GM12878 (cell line): ENCODE measurements at regions of chr19 and their contacts with region 1.

Region 1: DNA sequence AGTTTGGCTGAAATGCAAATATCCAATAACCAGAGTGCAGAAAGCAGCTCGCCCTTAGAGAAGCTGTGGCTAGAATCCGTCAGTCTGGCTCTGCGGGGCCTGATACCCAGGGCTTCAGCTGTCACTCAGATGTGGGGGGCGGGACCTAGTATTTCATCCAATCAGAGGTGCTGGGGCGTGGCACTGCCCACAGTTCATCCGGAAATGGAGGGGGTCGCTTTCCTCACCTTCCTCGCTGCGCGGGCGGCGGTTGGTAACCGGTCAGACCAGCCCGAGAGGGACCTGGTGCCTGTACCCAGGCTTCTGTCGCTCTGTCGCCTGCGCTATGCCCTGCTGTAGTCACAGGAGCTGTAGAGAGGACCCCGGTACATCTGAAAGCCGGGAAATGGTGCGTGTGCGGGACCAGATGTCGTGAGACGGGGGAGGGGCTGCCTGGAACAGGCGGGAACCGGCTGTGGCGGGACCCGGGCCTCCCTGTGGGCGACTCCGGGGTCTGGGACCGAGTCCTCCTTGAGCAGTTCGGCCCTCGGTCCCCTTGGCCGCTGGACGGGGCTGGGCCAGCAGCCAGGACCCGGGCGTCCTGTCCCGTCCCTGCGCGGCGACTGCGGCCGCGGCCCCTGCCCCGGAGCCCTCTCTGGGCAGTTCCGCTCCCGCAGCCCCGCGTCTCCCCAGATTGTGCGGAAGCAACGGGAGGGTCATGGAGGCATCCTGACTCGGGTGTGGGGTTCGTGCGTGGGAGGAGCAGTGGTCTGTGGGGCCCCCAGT is at the start of gene ZNF700:
- DNase-seq: peak; percentile 92
- ATAC-seq: peak; percentile 93
- H3K4me3 ChIP-seq: peak within 1 kb of the TSS; percentile 96
- H3K27ac ChIP-seq: peak within 1 kb of the TSS; percentile 94
- H3K4me1 ChIP-seq: peaks cover 3% of the 10 kb centered on the region; the same call in 1 of the 2 replicates
- H3K27me3 ChIP-seq: no peaks in the 10 kb centered on the region
- CTCF ChIP-seq: no peak
- EP300 ChIP-seq: no peak
- POLR2A ChIP-seq: peak; percentile 96
- RAD21 ChIP-seq: no peak
- polyA plus RNA-seq, gene ZNF700: 6.7 to 8.3 TPM

Region 2: GRCh38 chr19:11798391-11799330 is 126.4 kb before region 1 on chr19 and contains the start of gene ZNF491:
- CTCF ChIA-PET with region 1: interaction called, 57 read pairs
- POLR2A ChIA-PET with region 1: interaction called, 10 read pairs
- RAD21 ChIA-PET with region 1: interaction called, 40 read pairs
- SMC1A ChIA-PET with region 1: interaction called, 36 read pairs
- in situ Hi-C with region 1: no loop called
- intact Hi-C with region 1: loop called (anchors 5 kb)
- DNase-seq: no peak
- ATAC-seq: peak; percentile 99
- H3K4me3 ChIP-seq: peak within 1 kb of the TSS; percentile 78
- H3K27ac ChIP-seq: peak within 1 kb of the TSS; percentile 27
- H3K4me1 ChIP-seq: peaks cover 7% of the 10 kb centered on the region
- H3K27me3 ChIP-seq: no peaks in the 10 kb centered on the region
- CTCF ChIP-seq: peak; percentile 17 to 29 (median 22); a peak in 3 of 6 replicates
- EP300 ChIP-seq: no peak
- POLR2A ChIP-seq: peak; percentile 84
- RAD21 ChIP-seq: no peak
- polyA plus RNA-seq, gene ZNF491: 0.18 to 0.49 TPM

Region 3: GRCh38 chr19:11894851-11895250 is 30.2 kb before region 1 on chr19:
- CTCF ChIA-PET with region 1: no interaction called
- POLR2A ChIA-PET with region 1: no interaction called
- RAD21 ChIA-PET with region 1: no interaction called
- SMC1A ChIA-PET with region 1: no interaction called
- in situ Hi-C with region 1: no loop called
- intact Hi-C with region 1: no loop called
- DNase-seq: no peak
- ATAC-seq: no peak
- H3K4me3 ChIP-seq: no peak overlapping the region
- H3K27ac ChIP-seq: no peak overlapping the region
- H3K4me1 ChIP-seq: no peaks in the 10 kb centered on the region
- H3K27me3 ChIP-seq: no peaks in the 10 kb centered on the region
- CTCF ChIP-seq: no peak
- EP300 ChIP-seq: no peak
- POLR2A ChIP-seq: no peak
- RAD21 ChIP-seq: no peak

Region 4: GRCh38 chr19:11964858-11965645 is 40.0 kb after region 1 on chr19 and contains the start of gene ZNF763:
- CTCF ChIA-PET with region 1: interaction called, 80 read pairs
- POLR2A ChIA-PET with region 1: interaction called, 18 read pairs
- RAD21 ChIA-PET with region 1: interaction called, 36 read pairs
- SMC1A ChIA-PET with region 1: interaction called, 47 read pairs
- in situ Hi-C with region 1: no loop called
- intact Hi-C with region 1: loop called (anchors 1 kb)
- DNase-seq: peak; percentile 79
- ATAC-seq: peak; percentile 97
- H3K4me3 ChIP-seq: peak within 1 kb of the TSS; percentile 70
- H3K27ac ChIP-seq: peak within 1 kb of the TSS; percentile 94
- H3K4me1 ChIP-seq: peaks cover 7% of the 10 kb centered on the region
- H3K27me3 ChIP-seq: no peaks in the 10 kb centered on the region
- CTCF ChIP-seq: no peak
- EP300 ChIP-seq: peak; percentile 48 to 63; a peak in 2 of 4 replicates
- POLR2A ChIP-seq: peak; percentile 82
- RAD21 ChIP-seq: no peak
- polyA plus RNA-seq, gene ZNF763: 0.86 to 0.89 TPM

Region 5: GRCh38 chr19:12000152-12000981 is 75.3 kb after region 1 on chr19:
- CTCF ChIA-PET with region 1: interaction called, 10 read pairs
- POLR2A ChIA-PET with region 1: interaction called, 4 read pairs
- RAD21 ChIA-PET with region 1: interaction called, 8 read pairs
- SMC1A ChIA-PET with region 1: interaction called, 4 read pairs
- in situ Hi-C with region 1: no loop called
- intact Hi-C with region 1: no loop called
- DNase-seq: peak; percentile 85
- ATAC-seq: peak; percentile 91
- H3K4me3 ChIP-seq: peak overlapping the region; percentile 42; the same call in 1 of the 2 replicates
- H3K27ac ChIP-seq: peak overlapping the region; percentile 66
- H3K4me1 ChIP-seq: peaks cover 16% of the 10 kb centered on the region
- H3K27me3 ChIP-seq: no peaks in the 10 kb centered on the region
- CTCF ChIP-seq: no peak
- EP300 ChIP-seq: peak; percentile 65 to 88; a peak in 2 of 4 replicates
- POLR2A ChIP-seq: no peak
- RAD21 ChIP-seq: no peak

Region 6: GRCh38 chr19:12064590-12065538 is 139.8 kb after region 1 on chr19 and contains the start of gene ZNF844:
- CTCF ChIA-PET with region 1: interaction called, 38 read pairs
- POLR2A ChIA-PET with region 1: no interaction called
- RAD21 ChIA-PET with region 1: interaction called, 17 read pairs
- SMC1A ChIA-PET with region 1: interaction called, 12 read pairs
- in situ Hi-C with region 1: no loop called
- intact Hi-C with region 1: no loop called
- DNase-seq: peak; percentile 48
- ATAC-seq: peak; percentile 20; the same call in 1 of the 3 replicates
- H3K4me3 ChIP-seq: peak within 1 kb of the TSS; percentile 64
- H3K27ac ChIP-seq: peak within 1 kb of the TSS; percentile 86
- H3K4me1 ChIP-seq: no peaks in the 10 kb centered on the region
- H3K27me3 ChIP-seq: no peaks in the 10 kb centered on the region
- CTCF ChIP-seq: no peak
- EP300 ChIP-seq: no peak
- POLR2A ChIP-seq: peak; percentile 97
- RAD21 ChIP-seq: no peak
- polyA plus RNA-seq, gene ZNF844: 0.16 to 0.26 TPM

Region 7: DNA sequence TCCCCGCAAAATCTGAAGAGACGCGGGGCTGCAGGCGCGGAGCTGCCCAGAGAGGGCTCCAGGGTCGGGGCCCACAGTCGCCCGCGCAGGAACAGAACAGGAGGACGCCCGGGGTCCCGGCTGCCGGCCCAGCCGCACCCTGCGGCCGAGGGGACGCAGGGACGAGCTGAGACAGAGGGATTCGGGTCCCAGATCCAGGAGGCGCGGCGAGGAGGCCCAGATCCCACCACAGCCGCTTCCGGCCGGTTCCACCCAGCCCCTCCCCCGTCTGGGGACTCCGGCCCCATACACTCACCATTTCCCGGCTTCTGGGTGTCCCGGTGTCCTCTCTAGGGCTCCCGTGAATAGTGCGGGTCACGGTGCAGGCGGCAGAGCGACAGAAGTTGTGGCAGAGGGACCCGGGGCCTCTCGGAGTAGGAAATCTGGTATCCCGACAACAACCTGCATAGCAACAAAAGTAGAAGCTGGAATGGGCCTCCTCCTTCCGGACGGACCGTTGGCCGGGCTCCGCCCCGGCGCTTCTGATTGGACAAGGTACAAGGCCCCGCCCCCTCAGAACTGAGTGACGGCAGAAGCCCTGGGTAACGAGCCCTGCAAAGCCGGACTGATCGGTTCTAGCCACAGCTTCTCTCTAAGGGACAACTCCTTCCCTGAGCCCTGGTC is 214.9 kb after region 1 on chr19 and contains the start of gene ZNF20:
- CTCF ChIA-PET with region 1: interaction called, 84 read pairs
- POLR2A ChIA-PET with region 1: interaction called, 6 read pairs
- RAD21 ChIA-PET with region 1: interaction called, 55 read pairs
- SMC1A ChIA-PET with region 1: interaction called, 28 read pairs
- in situ Hi-C with region 1: loop called (anchors 5 kb)
- intact Hi-C with region 1: loop called (anchors 1 kb)
- DNase-seq: peak; percentile 67
- ATAC-seq: peak; percentile 99
- H3K4me3 ChIP-seq: peak within 1 kb of the TSS; percentile 96
- H3K27ac ChIP-seq: peak within 1 kb of the TSS; percentile 85
- H3K4me1 ChIP-seq: peaks cover 3% of the 10 kb centered on the region
- H3K27me3 ChIP-seq: no peaks in the 10 kb centered on the region
- CTCF ChIP-seq: no peak
- EP300 ChIP-seq: no peak
- POLR2A ChIP-seq: peak; percentile 54; the same call in 1 of the 2 replicates
- RAD21 ChIP-seq: no peak
- polyA plus RNA-seq, gene ZNF20: 2.5 to 2.8 TPM